H1 (cell line): ENCODE measurements at regions of chr7 and their contacts with region 1.

Region 1: GRCh38 chr7:92404170-92404614 is 43.1 kb upstream of the GATAD1 start:
- DNase-seq: no peak
- H3K4me3 ChIP-seq: no peak overlapping the region
- H3K27ac ChIP-seq: no peak overlapping the region; the same call in 1 of the 2 replicates
- H3K4me1 ChIP-seq: peaks cover 0 to 5% (median 0%) of the 10 kb centered on the region in 4 experiments; a peak in 1 of 7 replicates
- H3K27me3 ChIP-seq: peaks cover 0 to 1% (median 0%) of the 10 kb centered on the region in 4 experiments; a peak in 1 of 7 replicates
- CTCF ChIP-seq: peak; percentile 20 to 54 (median 40); a peak in 3 of 4 replicates
- EP300 ChIP-seq: no peak
- POLR2A ChIP-seq: no peak
- RAD21 ChIP-seq: peak; percentile 51 to 69

Region 2: DNA sequence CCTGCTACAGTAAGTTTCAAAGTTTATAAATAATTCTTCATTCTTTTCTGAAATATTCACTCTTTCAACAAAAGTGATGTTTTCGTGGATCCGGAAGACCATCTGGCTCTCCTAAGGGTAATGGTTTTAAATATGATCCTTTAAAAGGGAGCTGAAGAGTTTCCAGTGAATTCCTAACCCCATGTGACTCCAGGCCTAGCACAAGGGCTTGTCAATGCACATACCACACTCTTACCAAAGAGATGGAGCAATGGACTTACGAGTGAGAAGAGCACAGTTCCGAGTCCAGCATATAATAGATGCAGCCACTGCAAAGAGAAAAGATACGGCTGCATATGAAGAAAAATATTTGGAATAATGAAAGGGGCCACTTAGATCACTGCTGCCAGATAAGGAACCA is 11.0 kb after region 1 on chr7:
- CTCF ChIA-PET with region 1: interaction called, 30 read pairs
- POLR2A ChIA-PET with region 1: interaction called, 3 read pairs
- DNase-seq: no peak
- H3K4me3 ChIP-seq: no peak overlapping the region
- H3K27ac ChIP-seq: no peak overlapping the region
- H3K4me1 ChIP-seq: no peaks in the 10 kb centered on the region
- H3K27me3 ChIP-seq: no peaks in the 10 kb centered on the region; a peak in 1 of 7 replicates
- CTCF ChIP-seq: no peak
- EP300 ChIP-seq: no peak
- POLR2A ChIP-seq: no peak
- RAD21 ChIP-seq: no peak